ENCODE measurements at regions of chr18 and their contacts with region 1.

Region 1: GRCh38 chr18:62714671-62715435 is 488 bp upstream of the PHLPP1 start:
- DNase-seq: peak; percentile 89 to 93 (median 92)
- H3K4me3 ChIP-seq: peak overlapping the region; percentile 8 to 71
- H3K4me3 Mint-ChIP-seq: peak overlapping the region; percentile 87 to 97 (median 92)
- H3K27ac ChIP-seq: peak overlapping the region; percentile 76
- H3K27ac Mint-ChIP-seq: peak overlapping the region; percentile 93 to 99 (median 98)
- H3K4me1 ChIP-seq: peaks cover 25% of the 10 kb centered on the region
- H3K4me1 Mint-ChIP-seq: peaks cover 19 to 39% (median 24%) of the 10 kb centered on the region in 4 donors
- H3K27me3 ChIP-seq: no peaks in the 10 kb centered on the region
- H3K27me3 Mint-ChIP-seq: no peaks in the 10 kb centered on the region

Region 2: DNA sequence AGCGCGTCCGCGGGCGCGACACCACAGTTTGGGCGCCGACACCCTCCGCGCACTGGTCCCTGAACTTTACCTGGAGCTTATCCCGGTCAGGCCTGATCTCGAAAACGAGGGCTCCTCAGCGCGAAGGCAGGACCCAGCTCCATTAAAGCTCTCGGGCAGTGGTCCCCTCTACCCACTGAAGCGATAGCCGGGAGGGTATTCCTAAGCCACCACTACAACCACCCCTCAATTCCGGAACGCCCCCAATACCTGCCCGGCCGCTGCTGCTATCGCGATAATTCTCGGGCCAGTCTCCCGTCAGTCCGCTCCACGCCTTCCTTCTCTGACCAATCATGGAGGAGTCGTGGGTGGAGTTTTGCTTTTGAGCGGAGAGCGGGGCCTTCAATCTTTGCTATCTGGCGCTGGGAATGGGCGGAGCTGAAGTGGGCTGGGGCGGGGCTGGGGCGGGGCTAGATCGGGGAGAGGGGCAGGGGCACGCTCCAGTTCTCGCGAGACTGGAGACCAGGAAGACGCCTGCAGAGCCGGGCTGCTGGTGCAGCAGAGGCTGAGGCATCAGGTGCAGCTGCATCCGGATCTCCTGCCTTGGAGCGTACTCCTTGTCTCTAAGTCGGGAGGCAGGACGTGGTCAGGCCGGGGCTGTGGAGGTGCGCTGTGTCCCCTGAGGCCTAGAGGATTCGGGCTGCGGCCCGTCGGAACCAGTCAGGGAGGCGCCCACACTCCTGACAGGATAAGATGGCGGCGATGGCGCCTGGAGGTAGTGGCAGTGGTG is 527.9 kb before region 1 on chr18 and contains the starts of genes PIGN and RELCH:
- CTCF ChIA-PET with region 1: no interaction called
- POLR2A ChIA-PET with region 1: interaction called, 6 read pairs
- intact Hi-C with region 1: loop called (anchors 1 kb)
- DNase-seq: peak; percentile 95 to 99 (median 97)
- H3K4me3 ChIP-seq: peak within 1 kb of the TSS; percentile 76 to 100
- H3K4me3 Mint-ChIP-seq: peak within 1 kb of the TSS; percentile 94 to 99 (median 99)
- H3K27ac ChIP-seq: peak within 1 kb of the TSS; percentile 79
- H3K27ac Mint-ChIP-seq: peak within 1 kb of the TSS; percentile 95 to 97 (median 96)
- H3K4me1 ChIP-seq: peaks cover 56% of the 10 kb centered on the region
- H3K4me1 Mint-ChIP-seq: peaks cover 41 to 73% (median 57%) of the 10 kb centered on the region in 4 donors
- H3K27me3 ChIP-seq: no peaks in the 10 kb centered on the region
- H3K27me3 Mint-ChIP-seq: no peaks in the 10 kb centered on the region
- total RNA-seq, gene PIGN: 27.7 to 31.0 TPM
- total RNA-seq, gene RELCH: 57.2 to 59.4 TPM

Region 3: DNA sequence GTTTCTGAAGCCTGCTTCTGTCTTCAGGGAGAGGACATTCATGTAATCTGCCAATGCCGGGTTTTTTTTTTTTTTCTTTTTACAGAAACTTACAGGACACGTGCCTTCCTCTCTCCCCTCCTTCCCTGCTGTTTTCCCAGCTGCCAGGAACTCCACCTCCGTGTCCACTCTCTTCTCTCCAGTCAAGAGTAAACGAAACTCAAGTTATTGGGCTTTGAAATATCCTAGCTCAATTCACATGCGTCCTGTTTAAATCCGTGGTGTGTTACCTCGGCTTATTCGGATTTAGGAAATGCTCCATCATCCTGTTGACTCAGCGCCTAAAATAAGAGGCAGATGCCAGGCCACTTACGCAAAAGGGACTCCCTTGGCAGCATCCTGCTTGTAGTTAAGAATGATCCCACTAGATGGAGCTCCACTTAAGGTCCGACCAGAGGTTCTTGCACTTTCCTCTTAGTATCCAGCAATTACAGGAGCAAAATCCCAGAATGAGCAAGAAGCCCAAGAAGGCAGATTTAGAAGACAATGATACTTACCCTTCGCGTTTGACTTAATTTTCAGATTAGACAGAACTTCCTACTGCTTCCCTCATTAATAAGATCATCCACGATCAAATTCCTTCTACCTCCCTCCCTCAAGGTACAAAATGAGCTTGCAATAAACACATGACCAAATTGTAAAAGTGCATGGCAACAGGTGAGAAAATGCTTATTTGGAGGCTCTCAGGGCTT is 289.2 kb before region 1 on chr18:
- CTCF ChIA-PET with region 1: interaction called, 4 read pairs
- POLR2A ChIA-PET with region 1: interaction called, 6 read pairs
- intact Hi-C with region 1: loop called (anchors 2 kb)
- DNase-seq: peak; percentile 50 to 63 (median 61)
- H3K4me3 ChIP-seq: no peak overlapping the region
- H3K4me3 Mint-ChIP-seq: peak overlapping the region in 1 of 8 donors; percentile 18
- H3K27ac ChIP-seq: no peak overlapping the region
- H3K27ac Mint-ChIP-seq: peak overlapping the region in 4 of 7 donors; percentile 19 to 66 (median 52)
- H3K4me1 ChIP-seq: peaks cover 8% of the 10 kb centered on the region
- H3K4me1 Mint-ChIP-seq: peaks cover 13 to 16% (median 16%) of the 10 kb centered on the region in 4 donors
- H3K27me3 ChIP-seq: no peaks in the 10 kb centered on the region
- H3K27me3 Mint-ChIP-seq: peaks cover 0 to 3% of the 10 kb centered on the region in 2 donors

Region 4: DNA sequence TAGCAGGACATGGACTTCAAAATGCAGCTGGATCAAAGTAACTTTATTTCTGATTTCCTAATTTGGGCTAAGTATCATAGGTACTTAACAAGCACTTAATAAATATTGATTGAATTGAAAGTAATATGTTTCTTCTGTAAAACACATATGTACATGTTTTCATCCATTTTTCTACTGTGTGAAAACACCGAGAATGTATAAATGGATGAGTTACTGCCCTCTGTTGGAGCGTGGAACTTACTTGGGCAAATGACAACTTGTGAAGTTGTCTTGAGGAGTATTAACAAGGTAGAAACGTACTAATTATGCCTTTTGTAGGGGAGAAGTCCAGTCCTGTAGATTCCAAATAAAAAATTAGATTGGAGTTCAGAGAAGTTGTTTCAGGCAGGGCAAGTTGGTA is 87.7 kb after region 1 on chr18:
- CTCF ChIA-PET with region 1: no interaction called
- POLR2A ChIA-PET with region 1: interaction called, 3 read pairs
- intact Hi-C with region 1: loop called (anchors 2 kb)
- DNase-seq: no peak
- H3K4me3 ChIP-seq: no peak overlapping the region
- H3K4me3 Mint-ChIP-seq: no peak overlapping the region
- H3K27ac ChIP-seq: no peak overlapping the region
- H3K27ac Mint-ChIP-seq: no peak overlapping the region
- H3K4me1 ChIP-seq: no peaks in the 10 kb centered on the region
- H3K4me1 Mint-ChIP-seq: peaks cover 0 to 2% (median 0%) of the 10 kb centered on the region in 4 donors
- H3K27me3 ChIP-seq: no peaks in the 10 kb centered on the region
- H3K27me3 Mint-ChIP-seq: no peaks in the 10 kb centered on the region

Region 5: GRCh38 chr18:62982600-62983251 is 267.9 kb after region 1 on chr18:
- CTCF ChIA-PET with region 1: interaction called, 39 read pairs
- POLR2A ChIA-PET with region 1: interaction called, 17 read pairs
- intact Hi-C with region 1: loop called (anchors 1 kb)
- DNase-seq: peak in 4 of 5 donors; percentile 36 to 51 (median 48)
- H3K4me3 ChIP-seq: no peak overlapping the region
- H3K4me3 Mint-ChIP-seq: peak overlapping the region in 5 of 8 donors; percentile 51 to 78 (median 69)
- H3K27ac ChIP-seq: no peak overlapping the region
- H3K27ac Mint-ChIP-seq: peak overlapping the region in 1 of 7 donors; percentile 18
- H3K4me1 ChIP-seq: peaks cover 5% of the 10 kb centered on the region
- H3K4me1 Mint-ChIP-seq: peaks cover 0 to 8% (median 6%) of the 10 kb centered on the region in 4 donors
- H3K27me3 ChIP-seq: no peaks in the 10 kb centered on the region
- H3K27me3 Mint-ChIP-seq: no peaks in the 10 kb centered on the region

Region 6: GRCh38 chr18:63367053-63367953 is 652.5 kb after region 1 on chr18 and contains the start of gene KDSR:
- CTCF ChIA-PET with region 1: interaction called, 4 read pairs
- POLR2A ChIA-PET with region 1: interaction called, 3 read pairs
- intact Hi-C with region 1: loop called (anchors 2 kb)
- DNase-seq: peak; percentile 81 to 84 (median 81)
- H3K4me3 ChIP-seq: peak within 1 kb of the TSS; percentile 90 to 98
- H3K4me3 Mint-ChIP-seq: peak within 1 kb of the TSS; percentile 91 to 98 (median 97)
- H3K27ac ChIP-seq: peak within 1 kb of the TSS; percentile 71
- H3K27ac Mint-ChIP-seq: peak within 1 kb of the TSS; percentile 88 to 95 (median 94)
- H3K4me1 ChIP-seq: peaks cover 39% of the 10 kb centered on the region
- H3K4me1 Mint-ChIP-seq: peaks cover 27 to 55% (median 39%) of the 10 kb centered on the region in 4 donors
- H3K27me3 ChIP-seq: no peaks in the 10 kb centered on the region
- H3K27me3 Mint-ChIP-seq: no peaks in the 10 kb centered on the region
- total RNA-seq, gene KDSR: 59.4 to 61.7 TPM

Region 7: DNA sequence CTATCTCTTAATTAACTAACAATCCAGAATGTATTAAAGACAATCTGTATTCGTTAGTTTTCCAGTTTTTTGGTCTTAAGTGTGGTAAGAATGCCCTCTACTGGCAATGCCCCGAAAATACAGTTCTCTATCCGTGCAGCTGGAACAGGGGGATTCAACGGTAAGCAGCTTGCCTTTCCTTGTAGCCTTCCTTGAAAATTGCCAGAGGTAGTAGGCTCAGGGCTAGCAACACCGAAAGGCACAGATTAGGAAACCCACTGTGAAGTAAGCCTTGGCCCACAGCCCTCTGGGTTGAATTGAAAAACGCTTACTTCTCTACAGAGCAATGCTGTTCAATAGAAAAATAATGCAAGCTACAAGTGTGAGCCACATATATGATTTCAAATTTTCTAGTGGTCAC is 724.5 kb after region 1 on chr18:
- CTCF ChIA-PET with region 1: interaction called, 8 read pairs
- POLR2A ChIA-PET with region 1: no interaction called
- intact Hi-C with region 1: loop called (anchors 1 kb)
- DNase-seq: peak in 4 of 5 donors; percentile 54 to 58 (median 56)
- H3K4me3 ChIP-seq: no peak overlapping the region
- H3K4me3 Mint-ChIP-seq: peak overlapping the region in 1 of 8 donors; percentile 32
- H3K27ac ChIP-seq: no peak overlapping the region
- H3K27ac Mint-ChIP-seq: no peak overlapping the region
- H3K4me1 ChIP-seq: no peaks in the 10 kb centered on the region
- H3K4me1 Mint-ChIP-seq: peaks cover 0 to 3% (median 2%) of the 10 kb centered on the region in 4 donors
- H3K27me3 ChIP-seq: peaks cover 3% of the 10 kb centered on the region
- H3K27me3 Mint-ChIP-seq: peaks cover 0 to 9% of the 10 kb centered on the region in 2 donors

Measured in CD4-positive, alpha-beta memory T cell (primary cell).